Naive thymus-derived CD4-positive, alpha-beta T cell (primary cell): ENCODE measurements at regions of chr7 and their contacts with region 1.

Region 1: GRCh38 chr7:106176414-106177299 is 64.5 kb upstream of the SYPL1 start:
- DNase-seq: peak; percentile 24 to 73 (median 57)
- ATAC-seq: peak; percentile 92
- H3K4me3 ChIP-seq: no peak overlapping the region
- H3K4me3 Mint-ChIP-seq: no peak overlapping the region
- H3K27ac ChIP-seq: no peak overlapping the region
- H3K27ac Mint-ChIP-seq: no peak overlapping the region
- H3K4me1 ChIP-seq: no peaks in the 10 kb centered on the region
- H3K4me1 Mint-ChIP-seq: peaks cover 0 to 5% (median 0%) of the 10 kb centered on the region in 7 donors
- H3K27me3 ChIP-seq: peaks cover 0 to 7% of the 10 kb centered on the region in 2 donors
- H3K27me3 Mint-ChIP-seq: peaks cover 9 to 22% (median 19%) of the 10 kb centered on the region in 5 donors

Region 2: DNA sequence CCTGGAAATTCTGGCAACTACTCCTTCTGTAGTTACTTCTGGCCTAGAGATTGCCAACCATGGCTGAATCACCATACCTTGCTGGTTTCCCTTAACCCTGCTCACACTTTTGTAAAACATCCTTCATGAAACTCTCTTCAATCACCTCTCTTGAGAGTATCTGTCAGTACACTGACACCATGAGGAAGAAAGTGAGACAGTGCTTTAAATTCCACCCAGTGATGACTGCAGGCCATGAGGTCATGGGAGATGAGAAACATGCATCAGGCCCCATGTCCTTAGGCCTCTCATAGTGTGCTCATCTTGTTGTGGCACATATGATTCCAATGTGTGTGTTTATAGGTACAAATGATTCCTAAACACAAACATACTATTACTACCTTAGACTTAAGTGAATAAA is 132.7 kb after region 1 on chr7:
- CTCF ChIA-PET with region 1: no interaction called
- POLR2A ChIA-PET with region 1: no interaction called
- intact Hi-C with region 1: loop called in 1 of 2 experiments (anchors 5 kb)
- DNase-seq: no peak
- ATAC-seq: no peak
- H3K4me3 ChIP-seq: no peak overlapping the region
- H3K4me3 Mint-ChIP-seq: no peak overlapping the region
- H3K27ac ChIP-seq: no peak overlapping the region
- H3K27ac Mint-ChIP-seq: no peak overlapping the region
- H3K4me1 ChIP-seq: no peaks in the 10 kb centered on the region
- H3K4me1 Mint-ChIP-seq: peaks cover 0 to 7% (median 0%) of the 10 kb centered on the region in 7 donors
- H3K27me3 ChIP-seq: no peaks in the 10 kb centered on the region
- H3K27me3 Mint-ChIP-seq: peaks cover 0 to 28% (median 15%) of the 10 kb centered on the region in 5 donors

Region 3: GRCh38 chr7:106367018-106367420 is 190.4 kb after region 1 on chr7:
- CTCF ChIA-PET with region 1: no interaction called
- POLR2A ChIA-PET with region 1: no interaction called
- intact Hi-C with region 1: loop called (anchors 1 to 10 kb)
- DNase-seq: peak in 1 of 9 donors; percentile 1
- ATAC-seq: peak; percentile 74
- H3K4me3 ChIP-seq: no peak overlapping the region
- H3K4me3 Mint-ChIP-seq: no peak overlapping the region
- H3K27ac ChIP-seq: no peak overlapping the region
- H3K27ac Mint-ChIP-seq: no peak overlapping the region
- H3K4me1 ChIP-seq: no peaks in the 10 kb centered on the region
- H3K4me1 Mint-ChIP-seq: peaks cover 0 to 14% (median 0%) of the 10 kb centered on the region in 7 donors
- H3K27me3 ChIP-seq: no peaks in the 10 kb centered on the region
- H3K27me3 Mint-ChIP-seq: peaks cover 3 to 19% (median 10%) of the 10 kb centered on the region in 5 donors

Region 4: GRCh38 chr7:106461993-106462859 is 285.6 kb after region 1 on chr7:
- CTCF ChIA-PET with region 1: interaction called, 86 read pairs
- POLR2A ChIA-PET with region 1: no interaction called
- intact Hi-C with region 1: loop called in 1 of 2 experiments (anchors 1 kb)
- DNase-seq: peak in 5 of 9 donors; percentile 11 to 32 (median 14)
- ATAC-seq: peak; percentile 51
- H3K4me3 ChIP-seq: no peak overlapping the region
- H3K4me3 Mint-ChIP-seq: no peak overlapping the region
- H3K27ac ChIP-seq: no peak overlapping the region
- H3K27ac Mint-ChIP-seq: peak overlapping the region in 1 of 9 donors; percentile 14
- H3K4me1 ChIP-seq: no peaks in the 10 kb centered on the region
- H3K4me1 Mint-ChIP-seq: peaks cover 0 to 14% (median 0%) of the 10 kb centered on the region in 7 donors
- H3K27me3 ChIP-seq: no peaks in the 10 kb centered on the region
- H3K27me3 Mint-ChIP-seq: no peaks in the 10 kb centered on the region

Region 5: DNA sequence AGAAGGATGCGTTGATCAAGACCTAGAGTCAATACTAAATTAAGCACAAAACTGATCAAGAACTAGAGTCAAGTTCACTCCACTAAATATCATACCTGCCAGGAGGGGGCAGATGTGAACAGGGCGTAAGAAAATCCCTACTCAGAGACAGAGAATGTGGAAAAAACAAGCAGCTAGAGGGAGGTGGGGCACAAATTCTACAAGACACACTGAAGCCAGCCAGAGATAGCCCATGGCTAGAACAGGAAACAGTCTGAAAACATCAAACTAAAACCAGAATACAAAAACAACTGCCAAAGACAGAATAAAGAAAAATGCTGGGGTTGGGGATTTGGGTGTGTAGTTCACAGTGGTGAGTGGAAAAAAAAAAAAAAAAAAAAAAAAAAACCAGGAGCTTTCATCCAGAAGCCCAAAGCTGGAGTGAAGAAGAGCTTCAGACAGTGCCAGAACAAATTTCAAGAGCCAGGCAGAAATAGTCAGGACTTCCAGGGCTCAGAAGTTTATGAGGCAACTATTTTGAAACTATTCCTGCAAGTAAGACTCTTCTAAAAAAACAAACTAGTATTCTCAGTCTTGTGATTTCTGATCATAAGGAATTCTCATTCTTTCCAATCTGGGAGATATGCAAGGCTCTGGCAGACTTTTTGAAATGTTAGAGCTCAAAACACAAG is 366.0 kb after region 1 on chr7:
- CTCF ChIA-PET with region 1: no interaction called
- POLR2A ChIA-PET with region 1: no interaction called
- intact Hi-C with region 1: loop called in 1 of 2 experiments (anchors 5 kb)
- DNase-seq: peak in 6 of 9 donors; percentile 14 to 35 (median 26)
- ATAC-seq: peak; percentile 81
- H3K4me3 ChIP-seq: no peak overlapping the region
- H3K4me3 Mint-ChIP-seq: no peak overlapping the region
- H3K27ac ChIP-seq: no peak overlapping the region
- H3K27ac Mint-ChIP-seq: peak overlapping the region in 4 of 9 donors; percentile 4 to 30 (median 12)
- H3K4me1 ChIP-seq: no peaks in the 10 kb centered on the region
- H3K4me1 Mint-ChIP-seq: peaks cover 0 to 10% (median 6%) of the 10 kb centered on the region in 7 donors
- H3K27me3 ChIP-seq: no peaks in the 10 kb centered on the region
- H3K27me3 Mint-ChIP-seq: peaks cover 0 to 6% (median 0%) of the 10 kb centered on the region in 5 donors

Region 6: DNA sequence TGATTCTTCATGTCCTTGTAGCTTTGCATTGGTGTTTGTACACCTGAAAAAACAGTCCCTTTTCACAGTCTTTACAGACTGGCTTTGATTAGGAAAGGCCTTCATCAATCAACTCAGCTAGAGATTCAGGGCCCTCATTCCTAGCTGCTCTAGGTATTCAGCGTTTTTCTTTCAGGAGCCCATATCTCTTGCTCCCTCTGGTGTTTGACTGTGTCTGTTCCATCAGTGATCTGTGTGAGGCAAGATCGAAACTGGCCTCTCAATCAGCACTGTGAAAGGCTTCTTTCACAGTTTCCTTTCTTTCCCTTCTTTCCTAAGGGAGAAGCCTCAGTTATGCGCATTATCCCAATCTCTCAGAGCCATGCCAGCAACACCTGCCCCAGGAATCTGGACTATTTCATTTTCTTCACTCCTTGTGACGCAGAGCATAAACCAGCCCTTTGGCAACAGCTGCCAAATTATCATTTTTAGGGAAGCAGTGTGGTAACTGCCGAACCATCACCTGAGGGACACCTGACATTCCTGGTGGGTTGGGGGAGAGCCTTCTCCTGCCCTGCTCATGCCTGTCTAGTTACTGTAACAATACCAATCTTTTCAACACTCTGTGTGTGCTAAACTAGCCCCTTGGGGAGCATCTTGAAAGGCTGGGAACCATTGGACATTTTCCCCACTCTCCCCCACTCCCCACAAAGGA is 560.0 kb after region 1 on chr7:
- CTCF ChIA-PET with region 1: interaction called, 21 read pairs
- POLR2A ChIA-PET with region 1: no interaction called
- intact Hi-C with region 1: loop called (anchors 1 kb)
- DNase-seq: peak in 8 of 9 donors; percentile 21 to 65 (median 54)
- ATAC-seq: peak; percentile 95
- H3K4me3 ChIP-seq: no peak overlapping the region
- H3K4me3 Mint-ChIP-seq: peak overlapping the region in 5 of 10 donors; percentile 9 to 44 (median 22)
- H3K27ac ChIP-seq: no peak overlapping the region
- H3K27ac Mint-ChIP-seq: peak overlapping the region in 2 of 9 donors; percentile 32 to 80
- H3K4me1 ChIP-seq: peaks cover 0 to under 1% of the 10 kb centered on the region in 2 donors
- H3K4me1 Mint-ChIP-seq: peaks cover 10 to 19% (median 18%) of the 10 kb centered on the region in 7 donors
- H3K27me3 ChIP-seq: no peaks in the 10 kb centered on the region
- H3K27me3 Mint-ChIP-seq: no peaks in the 10 kb centered on the region